ENCODE measurements at regions of chr10 and their contacts with region 1.

Region 1: DNA sequence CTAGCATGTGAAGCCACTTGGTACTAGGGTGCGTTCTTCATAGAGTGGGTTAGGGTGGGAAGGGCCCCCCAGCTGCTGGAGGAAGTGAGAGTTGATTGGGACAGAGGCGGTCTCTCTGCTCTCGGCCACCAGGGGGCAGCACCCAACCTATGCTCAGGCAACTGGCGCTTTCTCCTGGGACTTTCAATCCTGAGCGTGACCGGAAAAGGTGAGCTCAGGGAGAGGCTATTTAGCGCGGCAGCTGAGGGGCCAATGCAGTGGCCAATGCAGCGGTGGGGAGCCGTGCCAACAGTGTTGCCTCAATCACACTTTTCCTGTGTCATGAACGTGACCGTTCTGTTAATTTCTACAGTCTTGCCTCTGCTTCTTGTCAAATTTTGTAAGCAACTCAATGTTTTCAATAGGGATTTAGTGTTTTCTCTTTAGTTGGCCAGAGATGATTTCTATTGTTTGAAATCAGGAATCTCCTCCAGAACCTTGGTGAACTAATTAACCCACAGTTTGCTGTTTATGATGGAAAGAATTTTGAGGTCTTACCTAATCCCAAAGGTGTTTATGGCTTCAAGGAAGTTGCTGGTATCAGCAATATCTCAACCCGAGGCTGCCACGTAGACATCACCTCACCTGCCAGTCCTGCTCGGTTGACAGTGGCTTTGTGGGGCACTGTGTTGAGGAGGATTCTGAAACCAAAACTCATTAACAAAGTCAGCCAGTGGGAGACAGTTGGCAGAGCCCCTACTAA is 67.9 kb upstream of the PDZD8 start:
- DNase-seq: peak; percentile 77 to 84
- ATAC-seq: peak; percentile 79 to 94
- H3K4me3 ChIP-seq: no peak overlapping the region
- H3K27ac ChIP-seq: peak overlapping the region; percentile 37 to 59; a peak in 5 of 6 replicates
- H3K4me1 ChIP-seq: peaks cover 27% of the 10 kb centered on the region
- CTCF ChIP-seq: peak; percentile 82
- EP300 ChIP-seq: no peak
- POLR2A ChIP-seq: no peak
- RAD21 ChIP-seq: peak; percentile 66 to 67

Region 2: DNA sequence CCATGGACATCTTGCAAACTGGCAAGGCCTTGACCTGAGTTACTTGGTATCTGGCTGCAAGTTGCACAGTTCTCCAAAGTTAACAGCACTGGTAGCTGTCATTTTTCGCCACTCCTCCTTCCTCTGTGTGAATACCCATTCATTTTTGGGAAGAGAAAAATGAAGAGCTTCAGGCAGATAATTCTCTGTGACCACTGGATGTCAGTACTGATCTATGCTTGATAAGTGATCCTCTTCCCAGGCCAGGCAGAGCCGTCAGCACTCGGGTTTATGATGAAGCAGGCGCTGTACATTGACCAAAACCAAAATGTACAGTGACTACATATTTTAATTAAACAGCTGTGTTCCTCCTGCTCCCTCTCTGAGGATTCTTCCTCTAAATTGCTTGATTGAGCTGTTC is 12.0 kb before region 1 on chr10:
- CTCF ChIA-PET with region 1: interaction called, 59 read pairs
- POLR2A ChIA-PET with region 1: no interaction called
- DNase-seq: peak; percentile 21 to 53
- ATAC-seq: peak; percentile 70 to 80
- H3K4me3 ChIP-seq: no peak overlapping the region
- H3K27ac ChIP-seq: no peak overlapping the region
- H3K4me1 ChIP-seq: peaks cover 6% of the 10 kb centered on the region; the same call in 1 of the 3 replicates
- CTCF ChIP-seq: peak; percentile 53
- EP300 ChIP-seq: no peak
- POLR2A ChIP-seq: no peak
- RAD21 ChIP-seq: peak; percentile 61 to 66

Region 3: DNA sequence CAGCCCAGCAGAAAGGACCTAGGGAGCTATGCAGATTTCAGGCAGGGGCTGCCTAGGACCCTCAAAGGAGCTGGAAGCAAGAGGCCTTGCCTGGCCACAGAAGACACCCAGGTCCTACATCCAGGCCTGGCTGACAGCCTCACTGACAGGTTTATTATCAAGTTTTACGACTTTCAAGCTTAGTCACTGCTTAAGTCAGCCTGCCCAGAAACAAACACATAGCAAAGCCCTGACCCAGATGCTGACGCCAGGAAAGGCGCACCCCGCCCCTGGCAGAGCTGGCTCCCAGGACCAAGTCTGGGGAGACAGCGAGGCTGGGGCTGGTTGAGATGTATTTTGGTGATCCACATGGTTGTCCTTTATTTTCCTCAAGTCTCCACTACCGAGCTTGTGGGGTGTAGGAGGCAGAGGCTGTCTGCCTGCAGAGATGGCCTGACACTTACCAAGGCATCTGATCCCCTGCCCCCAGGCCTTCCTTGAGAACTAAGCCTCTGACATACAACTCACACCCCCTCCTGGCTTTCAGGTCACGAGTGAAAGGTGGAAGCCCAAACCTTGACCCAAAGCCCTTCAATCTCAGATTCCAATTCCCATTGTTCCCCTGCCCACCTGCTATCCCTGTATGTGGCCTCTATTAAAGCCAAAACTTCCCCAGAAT is 18.8 kb after region 1 on chr10:
- CTCF ChIA-PET with region 1: interaction called, 22 read pairs
- POLR2A ChIA-PET with region 1: interaction called, 4 read pairs
- DNase-seq: peak; percentile 62 to 77
- ATAC-seq: peak; percentile 91 to 94
- H3K4me3 ChIP-seq: no peak overlapping the region
- H3K27ac ChIP-seq: peak overlapping the region in 1 of 2 experiments; percentile 82; a peak in 3 of 6 replicates
- H3K4me1 ChIP-seq: peaks cover 32% of the 10 kb centered on the region
- CTCF ChIP-seq: no peak
- EP300 ChIP-seq: no peak
- POLR2A ChIP-seq: no peak
- RAD21 ChIP-seq: no peak

Region 4: GRCh38 chr10:117477961-117478670 is 35.0 kb after region 1 on chr10:
- CTCF ChIA-PET with region 1: interaction called, 14 read pairs
- POLR2A ChIA-PET with region 1: no interaction called
- DNase-seq: peak; percentile 47 to 66
- ATAC-seq: peak; percentile 74 to 90
- H3K4me3 ChIP-seq: no peak overlapping the region
- H3K27ac ChIP-seq: no peak overlapping the region
- H3K4me1 ChIP-seq: no peaks in the 10 kb centered on the region
- CTCF ChIP-seq: peak; percentile 26; the same call in 1 of the 3 replicates
- EP300 ChIP-seq: no peak
- POLR2A ChIP-seq: no peak
- RAD21 ChIP-seq: peak; percentile 42 to 53; a peak in 4 of 5 replicates

Region 5: GRCh38 chr10:117552156-117552631 is 109.1 kb after region 1 on chr10:
- CTCF ChIA-PET with region 1: no interaction called
- POLR2A ChIA-PET with region 1: no interaction called
- DNase-seq: no peak
- ATAC-seq: no peak
- H3K4me3 ChIP-seq: no peak overlapping the region
- H3K27ac ChIP-seq: no peak overlapping the region
- H3K4me1 ChIP-seq: no peaks in the 10 kb centered on the region
- CTCF ChIP-seq: no peak
- EP300 ChIP-seq: no peak
- POLR2A ChIP-seq: no peak
- RAD21 ChIP-seq: no peak

Region 6: DNA sequence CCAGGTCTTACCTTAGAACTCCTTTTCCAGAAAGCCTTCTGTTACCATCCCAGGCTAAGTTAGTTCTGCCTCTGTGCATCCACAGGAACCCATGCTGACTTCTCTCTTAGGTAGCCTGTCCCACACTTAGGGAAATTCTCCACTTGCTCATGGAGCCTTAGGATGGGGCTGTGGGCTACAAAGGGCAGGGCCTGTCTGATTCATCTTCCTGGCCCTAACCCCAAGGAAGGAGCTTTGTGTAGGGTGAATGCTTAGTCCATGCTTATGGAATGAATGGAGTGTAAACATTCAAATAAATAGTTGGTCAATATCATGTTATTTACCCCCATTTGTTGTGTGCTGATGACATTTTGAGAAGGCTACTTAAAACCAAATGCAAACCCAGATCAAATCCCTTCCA is 154.1 kb after region 1 on chr10:
- CTCF ChIA-PET with region 1: no interaction called
- POLR2A ChIA-PET with region 1: no interaction called
- DNase-seq: no peak
- ATAC-seq: peak in 1 of 2 experiments; percentile 23; a peak in 2 of 6 replicates
- H3K4me3 ChIP-seq: no peak overlapping the region
- H3K27ac ChIP-seq: no peak overlapping the region
- H3K4me1 ChIP-seq: no peaks in the 10 kb centered on the region
- CTCF ChIP-seq: no peak
- EP300 ChIP-seq: no peak
- POLR2A ChIP-seq: no peak
- RAD21 ChIP-seq: no peak

Measured in A549 (cell line).